Activated naive CD4-positive, alpha-beta T cell treated with anti-CD3 and anti-CD28 coated beads for 36 hours (primary cell): ENCODE measurements at regions of chr18 and their contacts with region 1.

Region 1: GRCh38 chr18:51110073-51110803 is 80.2 kb downstream of the SMAD4 start:
- DNase-seq: peak; percentile 76
- H3K4me3 Mint-ChIP-seq: no peak overlapping the region
- H3K27ac Mint-ChIP-seq: no peak overlapping the region
- H3K4me1 Mint-ChIP-seq: peaks cover 17% of the 10 kb centered on the region
- H3K27me3 Mint-ChIP-seq: no peaks in the 10 kb centered on the region

Region 2: GRCh38 chr18:50806208-50806616 is 304.0 kb before region 1 on chr18:
- CTCF ChIA-PET with region 1: no interaction called
- intact Hi-C with region 1: no loop called
- DNase-seq: peak; percentile 7
- H3K4me3 Mint-ChIP-seq: no peak overlapping the region
- H3K27ac Mint-ChIP-seq: no peak overlapping the region
- H3K4me1 Mint-ChIP-seq: peaks cover 3% of the 10 kb centered on the region
- H3K27me3 Mint-ChIP-seq: peaks cover 5% of the 10 kb centered on the region

Region 3: DNA sequence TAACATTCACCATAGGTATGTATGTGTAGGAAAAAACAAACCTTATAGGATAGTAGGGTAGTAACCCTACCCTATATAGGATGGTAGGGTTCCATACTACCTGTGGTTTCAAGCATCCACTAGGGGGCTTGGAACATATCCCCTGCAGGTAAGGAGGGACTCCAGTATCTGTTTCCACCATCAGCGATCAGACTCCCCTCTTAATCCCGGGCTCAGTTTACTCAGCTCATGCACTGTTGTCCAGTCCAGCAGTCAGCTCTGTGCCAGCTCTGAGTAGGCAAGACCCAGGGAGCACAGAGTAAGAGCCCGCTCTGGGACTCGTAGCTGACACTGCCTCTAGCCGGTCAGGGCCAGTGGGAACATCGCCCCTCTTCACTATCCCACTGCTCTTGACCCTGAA is 25.6 kb after region 1 on chr18:
- CTCF ChIA-PET with region 1: interaction called, 11 read pairs
- intact Hi-C with region 1: no loop called
- DNase-seq: no peak
- H3K4me3 Mint-ChIP-seq: no peak overlapping the region
- H3K27ac Mint-ChIP-seq: no peak overlapping the region
- H3K4me1 Mint-ChIP-seq: no peaks in the 10 kb centered on the region
- H3K27me3 Mint-ChIP-seq: no peaks in the 10 kb centered on the region

Region 4: DNA sequence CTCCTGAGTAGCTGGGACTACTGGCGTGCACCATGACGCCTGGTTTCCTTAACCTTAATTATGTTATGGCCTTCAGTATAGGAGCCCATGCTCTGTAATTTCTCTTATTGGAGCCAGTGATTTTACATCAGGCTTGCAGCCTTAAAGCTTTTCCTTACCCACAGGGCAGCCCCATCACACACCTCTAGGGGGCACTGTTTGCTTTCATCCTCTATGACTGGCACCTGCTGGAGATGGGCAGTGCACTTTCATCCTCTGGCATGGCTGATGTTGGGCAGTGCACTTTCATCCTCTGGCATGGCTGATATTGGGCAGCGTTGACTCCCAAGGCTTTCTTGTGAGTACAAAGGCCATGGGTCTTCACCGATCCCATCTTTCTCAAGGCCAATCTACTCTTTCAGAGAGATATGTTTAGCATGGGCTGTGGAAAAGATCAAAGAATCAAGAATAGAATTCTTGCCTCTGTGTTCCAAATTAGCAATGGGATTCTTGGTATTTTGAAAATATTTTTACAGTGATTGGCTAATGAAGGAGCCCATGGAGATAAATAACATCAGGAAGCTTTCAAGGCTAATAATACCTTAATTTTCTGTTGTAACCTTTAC is 167.9 kb after region 1 on chr18:
- CTCF ChIA-PET with region 1: interaction called, 7 read pairs
- intact Hi-C with region 1: loop called (anchors 5 kb)
- DNase-seq: peak; percentile 75
- H3K4me3 Mint-ChIP-seq: no peak overlapping the region
- H3K27ac Mint-ChIP-seq: no peak overlapping the region
- H3K4me1 Mint-ChIP-seq: no peaks in the 10 kb centered on the region
- H3K27me3 Mint-ChIP-seq: no peaks in the 10 kb centered on the region

Region 5: DNA sequence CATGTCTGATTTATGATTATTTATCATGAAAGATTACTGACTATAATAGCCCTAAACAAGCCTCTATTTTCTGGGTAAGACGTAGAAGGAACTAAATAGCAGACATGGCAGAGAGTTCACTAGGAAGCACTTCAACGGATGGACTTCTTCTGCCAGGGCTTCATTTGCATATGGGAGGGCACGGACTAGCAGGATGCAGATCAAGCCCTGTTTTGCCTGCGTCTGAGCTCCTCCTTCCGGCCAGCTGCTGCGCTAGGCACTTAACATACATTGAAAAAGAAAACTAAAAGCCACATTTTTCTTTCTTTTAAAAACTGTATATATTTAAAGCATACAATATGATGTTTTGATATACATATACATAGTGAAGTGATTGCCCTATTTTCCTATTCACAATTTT is 427.2 kb after region 1 on chr18:
- CTCF ChIA-PET with region 1: no interaction called
- intact Hi-C with region 1: loop called (anchors 1 kb)
- DNase-seq: peak; percentile 25
- H3K4me3 Mint-ChIP-seq: no peak overlapping the region
- H3K27ac Mint-ChIP-seq: no peak overlapping the region
- H3K4me1 Mint-ChIP-seq: no peaks in the 10 kb centered on the region
- H3K27me3 Mint-ChIP-seq: peaks cover 10% of the 10 kb centered on the region

Region 6: GRCh38 chr18:51724790-51725721 is 614.8 kb after region 1 on chr18:
- CTCF ChIA-PET with region 1: no interaction called
- intact Hi-C with region 1: loop called (anchors 5 kb)
- DNase-seq: no peak
- H3K4me3 Mint-ChIP-seq: no peak overlapping the region
- H3K27ac Mint-ChIP-seq: no peak overlapping the region
- H3K4me1 Mint-ChIP-seq: no peaks in the 10 kb centered on the region
- H3K27me3 Mint-ChIP-seq: peaks cover 11% of the 10 kb centered on the region